Lower leg skin (tissue), 4 donors: ENCODE measurements at regions of chr1 and their contacts with region 1.

Region 1: DNA sequence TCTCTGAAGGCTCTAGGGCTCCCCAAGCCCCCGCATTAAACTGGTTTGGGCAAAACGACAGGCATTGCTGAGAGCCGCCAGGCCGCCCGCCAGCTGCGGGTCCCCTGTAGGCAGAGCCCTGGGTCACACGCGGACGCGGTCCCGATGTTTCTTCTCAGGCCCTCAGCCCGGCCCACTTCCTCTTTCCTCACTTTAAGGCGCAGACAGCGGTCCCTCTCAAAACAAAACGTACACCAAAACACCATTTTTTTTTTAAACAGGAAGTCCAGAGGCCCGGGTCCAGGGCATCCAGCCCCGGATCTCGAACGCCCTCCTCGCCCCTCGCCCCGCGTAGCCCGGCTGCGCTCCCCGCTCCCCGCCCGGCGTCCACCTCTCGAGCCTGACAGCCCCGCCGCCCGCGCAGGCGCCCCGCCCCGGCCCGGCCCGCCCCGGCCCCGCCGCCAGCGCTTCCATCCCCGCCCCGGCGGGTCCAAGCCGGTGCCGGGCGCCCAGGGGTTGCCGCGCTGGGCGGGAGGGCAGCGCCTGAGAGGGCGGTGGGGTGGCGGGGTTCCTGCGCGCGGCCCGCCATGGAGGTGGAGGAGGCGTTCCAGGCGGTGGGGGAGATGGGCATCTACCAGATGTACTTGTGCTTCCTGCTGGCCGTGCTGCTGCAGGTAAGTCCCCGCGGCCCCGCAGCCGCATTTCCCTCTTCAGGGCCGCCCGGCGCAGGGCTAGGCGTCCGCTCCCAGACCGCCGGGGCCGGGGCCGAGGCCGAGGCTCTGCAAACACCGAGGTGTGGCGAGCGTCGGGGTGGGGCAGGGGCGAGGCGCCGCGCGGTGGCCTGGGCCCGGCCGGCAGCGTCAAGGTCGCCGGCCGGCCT is at the start of gene SLC22A15:
- DNase-seq: peak; percentile 62 to 91
- H3K4me3 ChIP-seq: peak within 1 kb of the TSS; percentile 83
- CTCF ChIP-seq: no peak
- POLR2A ChIP-seq: no peak
- total RNA-seq, gene SLC22A15: 7.9 to 11.5 (median 10.5) TPM

Region 2: GRCh38 chr1:115811140-115811828 is 165.0 kb before region 1 on chr1:
- intact Hi-C with region 1: loop called (anchors 5 kb)
- DNase-seq: no peak
- H3K4me3 ChIP-seq: no peak overlapping the region
- CTCF ChIP-seq: no peak
- POLR2A ChIP-seq: no peak

Region 3: DNA sequence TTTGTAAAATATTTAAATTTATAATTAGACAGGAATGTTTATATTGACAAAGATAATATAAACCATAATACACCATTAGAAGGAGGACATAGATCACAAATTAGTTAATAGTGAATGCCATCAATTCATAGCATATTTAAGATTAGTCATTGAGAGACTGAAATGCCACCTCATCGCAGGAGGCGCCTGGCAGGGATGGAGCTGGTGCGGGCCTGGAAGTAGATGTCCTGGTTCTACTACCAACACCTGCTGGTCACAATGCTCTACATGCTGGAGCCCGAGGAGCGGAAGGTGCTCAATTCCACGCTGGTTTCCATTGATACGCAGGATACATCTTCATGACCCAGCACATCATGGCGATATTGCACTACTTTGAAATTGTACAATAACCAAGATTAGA is 60.0 kb before region 1 on chr1:
- intact Hi-C with region 1: no loop called
- DNase-seq: no peak
- H3K4me3 ChIP-seq: no peak overlapping the region
- CTCF ChIP-seq: no peak
- POLR2A ChIP-seq: no peak

Region 4: GRCh38 chr1:115929881-115930280 is 46.4 kb before region 1 on chr1:
- intact Hi-C with region 1: loop called (anchors 2 kb)
- DNase-seq: peak in 1 of 2 donors; percentile 33
- H3K4me3 ChIP-seq: no peak overlapping the region
- CTCF ChIP-seq: no peak
- POLR2A ChIP-seq: no peak